Posterior cingulate gyrus (tissue), 11 donors: ENCODE measurements at regions of chr7 and their contacts with region 1.

Region 1: DNA sequence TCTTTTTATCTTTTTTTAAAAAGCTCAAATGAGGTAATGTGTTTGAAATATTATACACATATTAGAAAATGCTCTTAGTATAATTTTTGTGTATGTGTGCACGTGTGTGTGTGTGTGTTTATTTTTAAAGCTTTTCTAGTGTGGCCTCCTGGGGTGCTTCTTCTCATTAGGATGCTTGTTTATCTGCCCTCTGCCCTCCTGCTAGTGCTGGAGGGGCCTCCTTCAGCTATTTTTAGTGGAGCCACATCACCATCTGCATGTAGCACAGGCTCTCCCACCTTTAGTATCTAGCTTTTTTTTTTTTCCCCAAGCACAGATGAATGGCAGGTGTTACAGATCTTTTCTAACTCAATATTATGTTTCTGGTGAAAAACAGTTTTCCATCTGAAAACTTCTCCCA is 155.7 kb upstream of the TMEM229A start:
- DNase-seq: no peak

Region 2: GRCh38 chr7:124284937-124285336 is 96.4 kb after region 1 on chr7:
- intact Hi-C with region 1: loop called (anchors 10 kb)
- DNase-seq: no peak